Mammary epithelial cell (primary cell): ENCODE measurements at regions of chr1 and their contacts with region 1.

Region 1: GRCh38 chr1:205422993-205423625 is 1.3 kb upstream of the LEMD1 start:
- DNase-seq: no peak
- H3K4me3 ChIP-seq: no peak overlapping the region
- H3K27ac ChIP-seq: no peak overlapping the region
- H3K4me1 ChIP-seq: no peaks in the 10 kb centered on the region
- H3K27me3 ChIP-seq: peaks cover 12% of the 10 kb centered on the region
- CTCF ChIP-seq: peak in 1 of 2 donors; percentile 34

Region 2: DNA sequence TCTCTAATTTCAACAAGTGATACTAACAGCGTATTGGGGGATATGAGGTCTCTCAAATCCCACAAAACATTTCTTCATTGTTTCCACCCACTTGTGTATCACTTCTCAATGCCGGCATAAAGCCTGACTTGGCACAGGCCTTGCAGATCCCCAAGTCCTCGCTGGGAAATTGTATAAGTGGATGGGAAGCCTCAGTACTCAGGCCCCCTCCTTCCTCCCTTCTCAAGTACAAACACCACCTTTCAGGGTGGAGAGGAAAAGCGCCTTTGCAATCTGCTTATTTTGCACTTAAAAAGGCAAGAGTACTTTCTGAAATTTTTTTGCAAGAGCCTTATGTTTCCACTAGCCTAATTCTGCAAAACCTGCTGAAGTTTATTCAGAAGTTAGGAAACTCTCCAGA is 40.5 kb before region 1 on chr1:
- CTCF ChIA-PET with region 1: no interaction called
- dilution Hi-C with region 1: loop called (anchors 5 kb)
- in situ Hi-C with region 1: no loop called
- intact Hi-C with region 1: no loop called
- DNase-seq: no peak
- H3K4me3 ChIP-seq: no peak overlapping the region
- H3K27ac ChIP-seq: no peak overlapping the region
- H3K4me1 ChIP-seq: no peaks in the 10 kb centered on the region
- H3K27me3 ChIP-seq: no peaks in the 10 kb centered on the region
- CTCF ChIP-seq: no peak